PC-3 (cell line): ENCODE measurements at regions of chr1 and their contacts with region 1.

Region 1: DNA sequence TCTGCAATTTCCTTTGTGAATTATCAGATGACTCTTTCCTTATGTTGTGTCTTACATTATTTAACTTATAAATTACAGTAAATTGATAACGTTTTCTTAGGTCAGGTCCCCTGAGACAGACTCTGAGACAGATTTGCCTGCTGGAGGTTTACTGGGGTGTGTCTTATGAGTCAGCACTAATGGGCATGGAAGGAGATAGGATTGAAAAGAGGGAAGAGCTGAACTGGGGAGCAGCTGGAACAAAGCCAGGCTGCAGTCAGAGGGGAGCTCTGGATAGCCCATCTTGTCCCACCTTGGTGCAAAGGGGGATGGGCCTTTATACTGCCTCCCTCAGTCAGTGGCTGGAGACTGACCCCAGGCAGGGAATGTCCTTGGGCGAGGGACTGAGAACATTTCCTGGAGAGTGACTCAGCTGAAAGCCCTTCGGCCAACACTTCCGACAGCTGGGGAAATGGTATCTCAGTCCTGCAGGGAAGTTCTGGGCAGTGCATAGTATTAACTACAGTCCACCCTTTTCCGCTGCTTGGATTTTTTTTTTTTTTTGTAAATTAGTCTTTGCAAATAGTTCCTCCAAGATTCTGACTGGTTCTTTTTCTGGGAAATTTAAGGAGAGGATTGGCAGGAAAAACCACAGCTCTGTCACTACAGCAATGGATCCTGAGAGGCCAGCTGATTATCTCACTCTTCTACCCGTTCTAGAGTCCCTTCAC is 39.0 kb upstream of the CDC42BPA start:
- DNase-seq: peak; percentile 96
- ATAC-seq: peak; percentile 95
- H3K4me3 ChIP-seq: peak overlapping the region; percentile 39
- H3K27ac ChIP-seq: peak overlapping the region; percentile 85
- H3K4me1 ChIP-seq: peaks cover 28% of the 10 kb centered on the region
- H3K27me3 ChIP-seq: no peaks in the 10 kb centered on the region
- CTCF ChIP-seq: no peak

Region 2: DNA sequence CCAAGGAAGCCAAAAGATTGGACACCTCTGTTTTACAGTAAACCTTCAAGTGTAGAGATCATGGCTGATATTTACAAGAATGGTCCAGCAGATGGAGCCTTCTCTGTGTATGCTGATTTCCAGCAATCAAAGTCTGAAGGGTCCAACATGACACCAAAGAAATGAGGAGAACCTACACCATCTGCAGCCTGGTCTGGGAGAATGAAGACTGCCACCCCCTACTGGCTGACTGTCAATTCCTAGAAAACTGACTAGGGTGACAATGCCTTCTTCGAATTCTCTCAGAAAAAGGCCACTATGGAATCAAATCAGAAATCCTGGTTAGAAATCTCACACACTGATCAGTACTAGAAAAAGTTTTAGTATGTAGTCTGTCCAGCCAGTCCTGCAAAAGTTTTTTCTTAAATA is 122.3 kb before region 1 on chr1:
- CTCF ChIA-PET with region 1: no interaction called
- POLR2A ChIA-PET with region 1: no interaction called
- intact Hi-C with region 1: loop called (anchors 5 kb)
- DNase-seq: peak; percentile 95
- ATAC-seq: peak; percentile 97
- H3K4me3 ChIP-seq: no peak overlapping the region
- H3K27ac ChIP-seq: no peak overlapping the region
- H3K4me1 ChIP-seq: no peaks in the 10 kb centered on the region
- H3K27me3 ChIP-seq: no peaks in the 10 kb centered on the region
- CTCF ChIP-seq: peak; percentile 98

Region 3: GRCh38 chr1:227388214-227389173 is 31.2 kb after region 1 on chr1:
- CTCF ChIA-PET with region 1: no interaction called
- POLR2A ChIA-PET with region 1: no interaction called
- intact Hi-C with region 1: loop called (anchors 2 kb)
- DNase-seq: peak; percentile 80
- ATAC-seq: peak; percentile 84
- H3K4me3 ChIP-seq: no peak overlapping the region; the same call in 1 of the 2 replicates
- H3K27ac ChIP-seq: peak overlapping the region; percentile 15
- H3K4me1 ChIP-seq: peaks cover 13% of the 10 kb centered on the region
- H3K27me3 ChIP-seq: no peaks in the 10 kb centered on the region
- CTCF ChIP-seq: no peak

Region 4: GRCh38 chr1:227428803-227429202 is 71.5 kb after region 1 on chr1:
- CTCF ChIA-PET with region 1: no interaction called
- POLR2A ChIA-PET with region 1: no interaction called
- intact Hi-C with region 1: loop called (anchors 1 kb)
- DNase-seq: peak; percentile 86
- ATAC-seq: peak; percentile 43
- H3K4me3 ChIP-seq: no peak overlapping the region
- H3K27ac ChIP-seq: peak overlapping the region; percentile 24
- H3K4me1 ChIP-seq: peaks cover 22% of the 10 kb centered on the region
- H3K27me3 ChIP-seq: no peaks in the 10 kb centered on the region
- CTCF ChIP-seq: no peak